WTC11 (cell line): ENCODE measurements at regions of chr22 and their contacts with region 1.

Region 1: DNA sequence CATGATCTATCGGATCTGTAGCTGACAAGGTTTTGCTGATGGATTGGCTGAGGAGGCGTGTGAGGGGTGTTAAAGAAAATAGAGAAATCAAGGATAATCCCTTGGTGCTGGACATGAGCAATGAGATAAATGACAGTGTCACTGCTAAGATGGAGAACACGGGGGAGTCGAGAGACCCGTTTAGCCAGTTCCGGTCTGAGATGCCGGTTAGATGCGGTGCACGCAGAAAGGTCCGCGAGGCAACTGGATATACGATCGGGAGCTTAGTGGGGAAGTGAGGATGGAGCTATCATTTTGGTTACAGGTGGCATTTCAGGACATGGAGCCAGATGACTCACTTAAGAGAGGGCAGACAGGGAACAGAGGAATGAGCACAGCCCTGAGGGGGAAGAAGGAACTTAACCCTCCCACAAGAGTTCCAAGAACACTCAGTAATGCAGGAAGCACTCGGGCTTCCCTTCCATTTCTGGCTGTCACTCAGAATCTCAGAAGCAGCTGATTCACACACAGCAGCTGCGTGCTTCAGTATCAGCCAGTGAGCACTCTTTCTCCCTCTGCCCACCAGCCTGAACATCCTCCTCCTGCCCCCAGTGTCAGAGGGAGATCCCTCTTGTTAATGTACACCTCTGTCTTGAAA is 34.9 kb downstream of the EFCAB6 start:
- DNase-seq: no peak
- ATAC-seq: no peak
- H3K4me3 Mint-ChIP-seq: no peak overlapping the region
- H3K27ac Mint-ChIP-seq: no peak overlapping the region
- H3K4me1 Mint-ChIP-seq: no peaks in the 10 kb centered on the region
- H3K27me3 Mint-ChIP-seq: no peaks in the 10 kb centered on the region
- CTCF ChIP-seq: no peak

Region 2: GRCh38 chr22:43796567-43796966 is 19.4 kb after region 1 on chr22:
- CTCF ChIA-PET with region 1: interaction called, 10 read pairs
- POLR2A ChIA-PET with region 1: no interaction called
- DNase-seq: no peak
- ATAC-seq: peak; percentile 34
- H3K4me3 Mint-ChIP-seq: no peak overlapping the region
- H3K27ac Mint-ChIP-seq: no peak overlapping the region
- H3K4me1 Mint-ChIP-seq: peaks cover 6% of the 10 kb centered on the region
- H3K27me3 Mint-ChIP-seq: peaks cover 3% of the 10 kb centered on the region
- CTCF ChIP-seq: no peak